ENCODE measurements at regions of chr3 and their contacts with region 1.

Region 1: DNA sequence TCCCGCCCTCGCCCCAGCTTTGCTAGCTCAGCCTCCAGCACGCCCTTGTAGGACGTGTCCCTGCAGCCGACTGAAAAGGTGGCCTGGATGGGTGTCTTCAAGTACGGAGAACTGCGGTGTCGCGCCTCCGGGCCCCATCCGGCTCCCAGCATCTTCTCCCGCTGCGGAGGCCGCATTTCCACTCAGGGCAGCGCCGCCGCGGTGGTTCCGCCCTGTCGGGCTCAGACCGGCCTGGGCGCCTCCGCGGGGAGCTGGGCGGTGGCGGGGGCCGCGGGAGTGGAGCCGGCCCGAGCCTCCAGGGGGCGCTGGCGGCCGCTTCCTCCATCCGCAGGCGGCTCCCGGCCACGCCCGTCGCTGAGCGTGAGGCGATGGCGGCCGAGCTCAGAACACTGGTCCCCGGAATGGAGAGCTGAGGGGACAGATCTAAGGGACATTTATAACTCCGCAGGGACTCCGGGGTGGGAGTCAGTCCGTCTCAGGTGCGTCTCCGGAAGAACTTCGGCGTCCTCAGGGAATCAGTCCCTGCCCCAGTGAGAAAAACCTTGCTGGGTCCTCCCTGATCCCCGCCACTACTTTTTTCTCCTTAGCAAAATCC is 13.6 kb upstream of the SMCO1 start:
- DNase-seq: peak in 6 of 7 donors; percentile 25 to 71 (median 56)
- H3K4me3 ChIP-seq: peak overlapping the region in 1 of 4 donors; percentile 60
- H3K27ac ChIP-seq: no peak overlapping the region
- H3K4me1 ChIP-seq: no peaks in the 10 kb centered on the region
- H3K27me3 ChIP-seq: no peaks in the 10 kb centered on the region
- CTCF ChIP-seq: peak in 5 of 6 experiments; percentile 19 to 70 (median 60)
- POLR2A ChIP-seq: no peak

Region 2: GRCh38 chr3:196268270-196269163 is 260.2 kb before region 1 on chr3:
- intact Hi-C with region 1: loop called in 1 of 2 experiments (anchors 10 kb)
- DNase-seq: no peak
- H3K4me3 ChIP-seq: no peak overlapping the region
- H3K27ac ChIP-seq: no peak overlapping the region
- H3K4me1 ChIP-seq: peaks cover 0 to 5% of the 10 kb centered on the region in 2 donors
- H3K27me3 ChIP-seq: no peaks in the 10 kb centered on the region
- CTCF ChIP-seq: no peak
- POLR2A ChIP-seq: no peak

Measured in adrenal gland (tissue), 19 donors.